Posterior vena cava (tissue), 2 donors: ENCODE measurements at regions of chr17 and their contacts with region 1.

Region 1: DNA sequence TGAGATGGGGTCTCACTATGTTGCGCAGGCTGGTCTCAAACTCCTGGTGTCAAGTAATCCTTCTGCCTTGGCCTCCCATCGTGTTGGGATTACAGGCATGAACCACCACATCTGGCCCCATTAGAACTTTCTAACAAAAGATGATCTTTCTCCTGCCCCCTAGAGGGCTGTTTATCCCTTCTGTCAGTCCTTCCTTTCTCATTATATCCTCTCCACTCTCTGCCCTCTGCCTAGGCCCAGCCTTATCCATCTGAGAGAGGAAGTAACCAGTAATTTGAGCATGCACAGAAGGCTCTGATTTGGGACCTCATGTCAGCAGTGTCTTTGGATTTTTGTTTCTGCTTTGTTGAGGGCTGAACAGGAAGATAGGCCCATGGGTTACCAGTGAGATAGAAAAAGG is 4.4 kb upstream of the DHX40 start:
- DNase-seq: no peak

Region 2: DNA sequence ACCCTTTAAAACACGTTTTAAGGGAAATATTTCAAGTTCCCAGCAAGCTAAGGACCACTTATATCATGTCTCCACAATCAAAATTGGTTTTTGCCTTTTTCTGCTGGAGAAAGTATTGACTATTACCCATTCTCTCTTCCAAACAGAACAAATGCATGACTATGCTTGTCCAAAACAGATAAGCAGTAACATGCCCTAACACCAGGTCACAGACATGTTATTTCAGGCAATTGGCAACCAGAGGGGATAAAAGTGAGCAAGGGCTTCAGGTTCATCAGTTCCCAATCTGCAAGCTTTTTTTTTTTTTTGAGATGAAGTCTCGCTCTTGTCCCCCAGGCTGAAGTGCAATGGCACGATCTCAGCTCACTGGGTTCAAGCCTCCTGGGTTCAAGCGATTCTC is 421.1 kb before region 1 on chr17:
- intact Hi-C with region 1: no loop called
- DNase-seq: no peak

Region 3: DNA sequence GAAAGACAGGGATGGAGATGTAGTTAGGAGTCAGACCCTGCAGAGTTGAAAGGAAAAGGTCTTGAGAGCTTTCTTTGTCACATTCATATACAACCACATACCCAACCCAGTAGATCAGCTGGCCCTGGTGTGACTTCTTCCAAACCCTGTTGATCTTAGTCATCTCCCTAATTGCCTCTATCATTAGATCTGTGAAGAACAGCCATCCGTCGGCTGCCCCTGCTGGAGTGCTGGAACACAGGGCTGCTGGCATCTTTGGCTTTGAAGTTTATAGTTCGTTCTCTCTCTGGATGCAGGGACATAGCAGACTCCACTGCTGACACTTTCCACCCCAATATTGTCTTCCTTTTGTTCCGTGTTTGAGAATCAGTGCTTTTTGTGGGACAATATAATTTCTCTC is 361.6 kb before region 1 on chr17:
- intact Hi-C with region 1: no loop called
- DNase-seq: no peak

Region 4: GRCh38 chr17:59451706-59452105 is 109.3 kb before region 1 on chr17:
- intact Hi-C with region 1: loop called in 1 of 2 experiments (anchors 5 kb)
- DNase-seq: no peak

Region 5: GRCh38 chr17:59464246-59464645 is 96.8 kb before region 1 on chr17:
- intact Hi-C with region 1: no loop called
- DNase-seq: no peak

Region 6: GRCh38 chr17:59607817-59608403 is 46.9 kb after region 1 on chr17:
- intact Hi-C with region 1: no loop called
- DNase-seq: no peak